Activated CD4-positive, alpha-beta T cell treated with anti-CD3 and anti-CD28 coated beads for 36 hours (primary cell): ENCODE measurements at regions of chr19 and their contacts with region 1.

Region 1: GRCh38 chr19:51480590-51480989 is 2.3 kb downstream of the CEACAM18 start:
- DNase-seq: peak; percentile 38
- ATAC-seq: no peak
- H3K4me3 Mint-ChIP-seq: no peak overlapping the region
- H3K27ac Mint-ChIP-seq: no peak overlapping the region
- H3K4me1 Mint-ChIP-seq: peaks cover 30% of the 10 kb centered on the region
- H3K27me3 Mint-ChIP-seq: peaks cover 22% of the 10 kb centered on the region

Region 2: DNA sequence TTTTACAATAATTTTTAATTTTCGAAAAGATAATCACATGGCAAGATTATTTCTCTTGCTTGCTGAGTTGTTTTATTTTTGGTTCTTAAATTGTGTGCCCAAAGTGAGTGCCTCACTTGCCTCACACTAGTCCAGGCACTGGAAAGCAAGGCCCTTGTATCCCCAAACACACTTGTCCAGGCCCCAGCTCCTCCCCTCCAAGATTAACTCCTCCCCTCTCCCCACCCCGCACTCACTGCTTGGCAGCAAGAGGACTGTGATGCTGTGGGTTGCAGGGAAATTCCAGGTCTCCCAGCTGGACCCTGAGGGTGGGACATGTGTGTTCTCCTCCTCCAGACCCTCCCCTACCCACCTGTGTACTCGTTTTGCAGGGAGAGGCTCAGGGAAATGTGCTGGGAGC is 17.1 kb after region 1 on chr19:
- CTCF ChIA-PET with region 1: no interaction called
- POLR2A ChIA-PET with region 1: no interaction called
- intact Hi-C with region 1: no loop called
- DNase-seq: no peak
- ATAC-seq: no peak
- H3K4me3 Mint-ChIP-seq: no peak overlapping the region
- H3K27ac Mint-ChIP-seq: no peak overlapping the region
- H3K4me1 Mint-ChIP-seq: peaks cover 23% of the 10 kb centered on the region
- H3K27me3 Mint-ChIP-seq: peaks cover 18% of the 10 kb centered on the region

Region 3: GRCh38 chr19:53285087-53285486 is 1804.5 kb after region 1 on chr19:
- CTCF ChIA-PET with region 1: no interaction called
- POLR2A ChIA-PET with region 1: no interaction called
- intact Hi-C with region 1: loop called in 1 of 2 experiments (anchors 10 kb)
- DNase-seq: no peak
- ATAC-seq: no peak
- H3K4me3 Mint-ChIP-seq: no peak overlapping the region
- H3K27ac Mint-ChIP-seq: no peak overlapping the region
- H3K4me1 Mint-ChIP-seq: no peaks in the 10 kb centered on the region
- H3K27me3 Mint-ChIP-seq: no peaks in the 10 kb centered on the region